ENCODE measurements at regions of chrX and their contacts with region 1.

Region 1: DNA sequence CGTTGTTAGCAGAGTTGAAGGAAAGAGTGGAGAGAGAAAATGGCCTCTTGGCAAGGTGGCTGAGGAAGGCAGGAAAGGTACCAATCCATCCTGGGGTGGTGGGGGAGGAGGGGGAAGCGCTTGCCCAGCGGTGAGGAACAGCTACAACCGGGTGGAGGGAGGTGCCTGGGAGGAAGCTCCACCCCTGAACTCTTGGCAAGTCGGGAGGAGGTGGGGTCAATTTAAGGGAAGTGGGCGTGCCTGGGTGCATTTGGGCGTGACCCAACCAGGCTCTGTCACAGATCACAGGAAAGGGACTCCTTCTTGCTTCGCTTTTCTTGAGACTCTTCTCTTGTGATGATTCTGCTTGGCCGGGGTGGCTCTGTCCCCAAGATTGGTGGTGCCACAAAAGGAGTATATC is 41.7 kb downstream of the BCORL1 start:
- DNase-seq: peak; percentile 90
- ATAC-seq: peak; percentile 100
- H3K4me3 ChIP-seq: peak overlapping the region in 1 of 5 experiments; percentile 13
- H3K4me3 Mint-ChIP-seq: peak overlapping the region; percentile 76
- H3K27ac ChIP-seq: peak overlapping the region; percentile 29 to 68
- H3K27ac Mint-ChIP-seq: peak overlapping the region; percentile 89
- H3K4me1 ChIP-seq: peaks cover 13 to 20% of the 10 kb centered on the region in 2 donors
- H3K4me1 Mint-ChIP-seq: peaks cover 15% of the 10 kb centered on the region
- H3K27me3 ChIP-seq: no peaks in the 10 kb centered on the region
- H3K27me3 Mint-ChIP-seq: no peaks in the 10 kb centered on the region
- CTCF ChIP-seq: no peak

Region 2: GRCh38 chrX:129606918-129607317 is 417.2 kb before region 1 on chrX:
- CTCF ChIA-PET with region 1: interaction called, 7 read pairs
- POLR2A ChIA-PET with region 1: no interaction called
- intact Hi-C with region 1: loop called (anchors 1 kb)
- DNase-seq: peak; percentile 68
- ATAC-seq: peak; percentile 63
- H3K4me3 ChIP-seq: no peak overlapping the region
- H3K4me3 Mint-ChIP-seq: no peak overlapping the region
- H3K27ac ChIP-seq: no peak overlapping the region
- H3K27ac Mint-ChIP-seq: no peak overlapping the region
- H3K4me1 ChIP-seq: peaks cover 12 to 15% of the 10 kb centered on the region in 2 donors
- H3K4me1 Mint-ChIP-seq: peaks cover 17% of the 10 kb centered on the region
- H3K27me3 ChIP-seq: no peaks in the 10 kb centered on the region
- H3K27me3 Mint-ChIP-seq: no peaks in the 10 kb centered on the region
- CTCF ChIP-seq: peak; percentile 72

Region 3: DNA sequence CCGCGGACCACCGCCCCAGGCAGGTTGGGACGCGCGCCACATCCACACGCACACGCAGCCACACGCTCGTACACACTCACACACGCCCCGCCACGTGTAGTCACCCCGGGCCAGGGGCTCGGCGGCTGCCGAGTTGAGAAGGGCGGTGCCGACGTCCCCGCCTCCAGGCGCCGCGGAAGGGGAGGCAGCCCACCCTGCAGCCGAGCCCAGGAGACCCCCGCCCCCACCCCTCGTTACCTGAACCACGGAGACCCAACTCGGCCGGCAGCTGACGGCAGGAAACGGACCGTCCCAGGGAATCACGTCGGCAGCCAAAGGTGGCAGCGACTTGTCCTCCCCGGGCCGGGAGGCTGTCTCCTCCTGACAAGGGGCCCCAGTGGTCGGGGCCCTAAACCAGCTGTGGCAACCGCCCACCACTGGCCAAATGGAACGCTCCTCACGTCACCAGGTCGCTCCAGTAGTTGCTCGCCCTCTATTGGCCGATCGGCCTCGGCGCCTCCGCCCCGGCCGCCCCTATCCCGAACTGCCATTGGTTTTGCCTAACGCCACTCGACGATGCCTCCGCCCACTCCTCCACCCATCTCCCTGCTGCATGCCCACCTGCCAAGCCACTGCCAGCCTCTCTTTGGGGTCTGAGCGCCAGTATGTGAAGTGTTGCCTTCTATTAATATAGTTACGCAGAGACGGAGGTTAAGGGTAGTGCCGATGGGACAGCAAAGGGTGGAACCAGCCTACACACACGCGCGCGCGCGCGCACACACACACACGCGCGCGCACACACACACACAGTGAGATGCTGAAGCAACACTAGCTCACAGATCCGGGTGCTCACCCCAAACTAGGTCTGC is 180.4 kb before region 1 on chrX and contains the start of gene ZDHHC9:
- CTCF ChIA-PET with region 1: no interaction called
- POLR2A ChIA-PET with region 1: no interaction called
- intact Hi-C with region 1: loop called (anchors 10 kb)
- DNase-seq: peak; percentile 89
- ATAC-seq: peak; percentile 99
- H3K4me3 ChIP-seq: peak within 1 kb of the TSS; percentile 8 to 75 (median 72)
- H3K4me3 Mint-ChIP-seq: peak within 1 kb of the TSS; percentile 94
- H3K27ac ChIP-seq: peak within 1 kb of the TSS in 1 of 2 donors; percentile 54
- H3K27ac Mint-ChIP-seq: peak within 1 kb of the TSS; percentile 87
- H3K4me1 ChIP-seq: peaks cover 4 to 11% of the 10 kb centered on the region in 2 donors
- H3K4me1 Mint-ChIP-seq: peaks cover 19% of the 10 kb centered on the region
- H3K27me3 ChIP-seq: peaks cover 0 to 3% (median 0%) of the 10 kb centered on the region in 4 experiments
- H3K27me3 Mint-ChIP-seq: no peaks in the 10 kb centered on the region
- CTCF ChIP-seq: no peak
- total RNA-seq, gene ZDHHC9: 4.5 and 6.1 TPM in 2 replicates

Region 4: GRCh38 chrX:129925305-129926092 is 98.6 kb before region 1 on chrX:
- CTCF ChIA-PET with region 1: interaction called, 185 read pairs
- POLR2A ChIA-PET with region 1: interaction called, 3 read pairs
- intact Hi-C with region 1: loop called (anchors 1 kb)
- DNase-seq: peak; percentile 79
- ATAC-seq: peak; percentile 66
- H3K4me3 ChIP-seq: no peak overlapping the region
- H3K4me3 Mint-ChIP-seq: no peak overlapping the region
- H3K27ac ChIP-seq: no peak overlapping the region
- H3K27ac Mint-ChIP-seq: no peak overlapping the region
- H3K4me1 ChIP-seq: no peaks in the 10 kb centered on the region
- H3K4me1 Mint-ChIP-seq: peaks cover 6% of the 10 kb centered on the region
- H3K27me3 ChIP-seq: no peaks in the 10 kb centered on the region
- H3K27me3 Mint-ChIP-seq: no peaks in the 10 kb centered on the region
- CTCF ChIP-seq: peak; percentile 69

Region 5: GRCh38 chrX:129931411-129932015 is 92.6 kb before region 1 on chrX:
- CTCF ChIA-PET with region 1: interaction called, 185 read pairs
- POLR2A ChIA-PET with region 1: interaction called, 10 read pairs
- intact Hi-C with region 1: loop called (anchors 1 kb)
- DNase-seq: peak; percentile 89
- ATAC-seq: peak; percentile 75
- H3K4me3 ChIP-seq: peak overlapping the region in 4 of 5 experiments; percentile 65 to 72 (median 71)
- H3K4me3 Mint-ChIP-seq: peak overlapping the region; percentile 90
- H3K27ac ChIP-seq: peak overlapping the region; percentile 80 to 82
- H3K27ac Mint-ChIP-seq: peak overlapping the region; percentile 98
- H3K4me1 ChIP-seq: peaks cover 0 to 5% of the 10 kb centered on the region in 2 donors
- H3K4me1 Mint-ChIP-seq: peaks cover 8% of the 10 kb centered on the region
- H3K27me3 ChIP-seq: no peaks in the 10 kb centered on the region
- H3K27me3 Mint-ChIP-seq: no peaks in the 10 kb centered on the region
- CTCF ChIP-seq: no peak

Region 6: DNA sequence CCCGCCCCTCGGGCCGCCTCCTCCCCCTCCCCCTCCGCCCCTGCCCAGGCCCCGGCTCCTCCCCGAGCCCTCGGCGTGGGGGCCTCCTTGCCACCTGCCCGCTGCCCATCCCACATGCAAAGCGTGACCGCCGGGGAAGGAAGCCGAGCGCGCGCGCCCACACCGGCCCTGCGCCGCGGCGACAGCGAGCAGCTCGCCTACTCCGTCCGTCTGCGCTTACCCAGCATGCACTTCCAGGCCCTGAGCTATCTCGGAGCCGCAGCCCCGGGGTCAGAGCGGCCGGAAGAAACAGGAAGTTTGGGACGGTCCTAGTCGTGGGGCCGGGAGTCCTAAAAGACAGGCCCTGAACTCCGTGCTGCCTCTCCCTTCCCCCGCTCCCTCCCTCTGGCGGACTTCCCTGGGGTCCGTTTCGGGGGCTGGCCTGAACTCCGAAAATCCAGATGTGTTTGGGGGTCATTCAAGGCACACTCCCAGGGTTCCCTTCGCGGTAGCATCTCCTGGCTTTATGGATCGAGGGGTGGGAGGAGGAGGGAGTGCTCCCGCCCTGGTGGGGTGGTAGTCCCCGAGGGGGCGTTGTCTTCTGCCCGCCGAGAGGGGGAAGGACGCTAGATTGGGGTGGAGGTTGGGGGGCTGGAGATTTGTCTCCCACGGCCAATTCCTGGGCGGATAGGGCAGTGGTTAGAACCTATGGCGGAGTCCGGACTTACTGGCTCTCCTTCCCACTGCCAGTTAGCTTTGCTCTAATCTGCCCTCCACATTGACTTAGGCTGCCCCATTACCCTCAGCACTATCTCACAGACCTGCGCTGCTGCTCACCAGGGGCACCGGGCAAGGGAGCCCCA is 66.7 kb before region 1 on chrX:
- CTCF ChIA-PET with region 1: interaction called, 4 read pairs
- POLR2A ChIA-PET with region 1: interaction called, 3 read pairs
- intact Hi-C with region 1: loop called (anchors 1 kb)
- DNase-seq: peak; percentile 77
- ATAC-seq: peak; percentile 79
- H3K4me3 ChIP-seq: peak overlapping the region in 4 of 5 experiments; percentile 43 to 56 (median 51)
- H3K4me3 Mint-ChIP-seq: peak overlapping the region; percentile 78
- H3K27ac ChIP-seq: peak overlapping the region; percentile 33 to 67
- H3K27ac Mint-ChIP-seq: peak overlapping the region; percentile 78
- H3K4me1 ChIP-seq: peaks cover 13 to 40% of the 10 kb centered on the region in 2 donors
- H3K4me1 Mint-ChIP-seq: peaks cover 41% of the 10 kb centered on the region
- H3K27me3 ChIP-seq: no peaks in the 10 kb centered on the region
- H3K27me3 Mint-ChIP-seq: no peaks in the 10 kb centered on the region
- CTCF ChIP-seq: no peak